CD8-positive, alpha-beta T cell (primary cell): ENCODE measurements at regions of chr17 and their contacts with region 1.

Region 1: GRCh38 chr17:1561400-1562175 is 1.0 kb downstream of the PITPNA start:
- DNase-seq: peak in 8 of 9 experiments; percentile 16 to 62 (median 34)
- ATAC-seq: peak; percentile 35
- H3K4me3 ChIP-seq: peak overlapping the region; percentile 40 to 41
- H3K4me3 Mint-ChIP-seq: peak overlapping the region; percentile 83
- H3K27ac ChIP-seq: peak overlapping the region in 1 of 2 experiments; percentile 40
- H3K27ac Mint-ChIP-seq: peak overlapping the region; percentile 66
- H3K4me1 ChIP-seq: peaks cover 19% of the 10 kb centered on the region
- H3K4me1 Mint-ChIP-seq: peaks cover 45% of the 10 kb centered on the region
- H3K27me3 ChIP-seq: no peaks in the 10 kb centered on the region
- H3K27me3 Mint-ChIP-seq: no peaks in the 10 kb centered on the region
- CTCF ChIP-seq: peak; percentile 38

Region 2: DNA sequence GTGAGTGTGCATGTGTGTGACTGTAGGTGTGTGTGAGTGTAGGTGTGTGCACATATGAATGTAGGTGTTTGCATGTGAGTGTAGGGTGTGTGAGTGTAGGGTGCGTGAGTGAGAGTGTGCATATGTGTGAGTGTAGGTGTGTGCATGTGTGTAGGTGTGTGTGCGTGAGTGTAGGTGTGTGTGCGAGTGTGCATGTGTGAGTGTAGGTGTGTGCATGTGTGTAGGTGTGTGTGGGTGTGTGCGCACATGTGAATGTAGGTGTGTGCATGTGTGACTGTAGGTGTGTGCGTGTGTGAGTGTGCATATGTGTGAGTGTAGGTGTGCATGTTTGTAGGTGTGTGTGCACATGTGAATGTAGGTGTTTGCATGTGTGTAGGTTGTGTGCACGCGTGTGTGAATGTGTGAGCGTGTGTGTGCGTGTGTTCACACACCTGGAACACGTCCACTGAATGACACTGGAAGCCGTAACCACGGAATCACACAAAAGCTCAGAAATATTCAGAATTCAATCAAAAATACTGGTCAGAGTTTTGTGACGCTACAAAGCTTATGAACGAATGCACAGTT is 748.9 kb before region 1 on chr17:
- CTCF ChIA-PET with region 1: no interaction called
- POLR2A ChIA-PET with region 1: no interaction called
- intact Hi-C with region 1: no loop called
- DNase-seq: no peak
- ATAC-seq: no peak
- H3K4me3 ChIP-seq: no peak overlapping the region
- H3K4me3 Mint-ChIP-seq: no peak overlapping the region
- H3K27ac ChIP-seq: no peak overlapping the region
- H3K27ac Mint-ChIP-seq: no peak overlapping the region
- H3K4me1 ChIP-seq: no peaks in the 10 kb centered on the region
- H3K4me1 Mint-ChIP-seq: no peaks in the 10 kb centered on the region
- H3K27me3 ChIP-seq: no peaks in the 10 kb centered on the region
- H3K27me3 Mint-ChIP-seq: peaks cover 9% of the 10 kb centered on the region
- CTCF ChIP-seq: no peak

Region 3: DNA sequence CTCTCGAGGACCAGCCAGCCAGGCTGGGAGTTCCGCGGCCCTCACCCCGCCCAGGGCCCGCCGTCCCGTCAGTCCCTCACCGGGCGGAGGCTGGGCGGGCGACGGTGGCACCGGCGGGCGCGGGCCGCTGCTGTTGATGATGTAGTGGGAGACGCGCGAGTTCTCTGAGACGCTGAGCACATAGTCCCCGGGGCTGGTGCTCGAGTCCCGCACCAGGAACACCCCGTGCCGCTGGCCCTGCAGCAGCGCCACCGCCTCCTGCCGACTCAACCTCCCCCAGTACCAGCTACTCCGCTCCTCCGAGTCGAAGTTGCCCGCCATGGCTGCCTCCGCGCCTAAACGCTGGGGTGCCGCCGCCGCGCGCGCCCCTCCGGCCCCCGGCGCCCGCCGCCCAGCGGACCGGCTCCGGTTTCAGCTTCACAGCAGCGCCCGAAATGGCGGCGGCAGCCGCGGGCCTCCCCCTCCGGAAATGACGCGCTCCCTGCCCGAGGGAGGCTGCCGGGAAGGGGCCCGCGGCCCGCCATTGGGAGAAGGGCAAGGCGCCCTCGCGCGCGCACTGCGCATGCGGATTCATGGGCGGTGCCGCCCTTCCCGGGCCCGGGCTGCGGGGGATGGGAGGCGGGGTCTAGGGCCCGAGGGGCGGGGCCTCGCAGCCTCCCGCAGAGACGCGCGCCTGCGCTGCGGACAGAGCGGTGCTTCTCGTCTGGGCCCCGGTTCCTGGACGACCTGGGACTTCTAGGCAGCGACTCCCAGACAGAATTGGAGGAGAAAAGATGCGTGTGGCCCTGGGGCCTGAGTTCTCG is 105.6 kb before region 1 on chr17 and contains the start of gene CRK:
- CTCF ChIA-PET with region 1: no interaction called
- POLR2A ChIA-PET with region 1: no interaction called
- intact Hi-C with region 1: loop called (anchors 1 to 5 kb)
- DNase-seq: peak; percentile 95 to 100 (median 99)
- ATAC-seq: peak; percentile 95
- H3K4me3 ChIP-seq: peak within 1 kb of the TSS; percentile 80 to 94
- H3K4me3 Mint-ChIP-seq: peak within 1 kb of the TSS; percentile 92
- H3K27ac ChIP-seq: peak within 1 kb of the TSS; percentile 92 to 93
- H3K27ac Mint-ChIP-seq: peak within 1 kb of the TSS; percentile 91
- H3K4me1 ChIP-seq: peaks cover 43% of the 10 kb centered on the region
- H3K4me1 Mint-ChIP-seq: peaks cover 46% of the 10 kb centered on the region
- H3K27me3 ChIP-seq: peaks cover 0 to 10% of the 10 kb centered on the region in 2 experiments
- H3K27me3 Mint-ChIP-seq: peaks cover 10% of the 10 kb centered on the region
- CTCF ChIP-seq: no peak
- total RNA-seq, gene CRK: 15.4 to 15.9 TPM

Region 4: DNA sequence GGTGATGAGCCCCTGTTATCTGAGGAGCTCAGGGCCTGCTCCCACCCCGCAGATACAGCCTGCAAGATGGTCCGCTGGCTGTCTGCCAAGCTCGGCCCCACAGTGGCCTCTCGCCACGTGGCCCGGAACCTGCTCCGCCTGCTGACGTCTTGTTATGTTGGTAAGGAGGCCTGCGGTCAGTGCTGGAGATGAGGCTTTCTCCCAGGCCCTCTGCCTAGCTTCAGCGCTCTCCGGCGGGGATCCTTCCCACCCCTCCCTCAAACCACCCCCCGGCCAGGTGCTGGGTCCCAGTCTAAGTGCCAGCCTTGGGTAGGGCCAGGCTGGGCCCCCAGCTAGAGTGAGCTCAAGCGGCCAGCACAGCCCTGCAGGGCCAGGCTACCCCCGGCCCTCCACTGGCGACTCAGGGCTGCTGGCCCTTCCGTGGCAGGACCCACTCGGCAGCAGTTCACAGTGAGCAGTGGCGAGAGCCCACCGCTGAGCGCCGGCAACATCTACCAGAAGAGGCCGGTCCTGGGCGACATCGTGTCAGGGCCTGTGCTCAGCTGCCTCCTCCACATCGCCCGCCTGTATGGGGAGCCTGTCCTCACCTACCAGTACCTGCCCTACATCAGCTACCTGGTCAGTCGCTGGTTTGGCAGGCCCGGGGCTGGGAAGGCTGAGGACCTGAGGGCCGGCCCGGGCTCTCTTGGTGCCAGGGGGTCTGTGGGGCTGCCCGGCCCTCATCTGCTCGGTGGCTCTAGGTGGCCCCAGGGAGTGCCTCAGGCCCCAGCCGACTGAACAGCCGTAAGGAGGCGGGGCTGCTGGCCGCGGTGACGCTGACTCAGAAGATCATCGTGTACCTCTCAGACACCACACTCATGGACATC is 169.0 kb after region 1 on chr17:
- CTCF ChIA-PET with region 1: no interaction called
- POLR2A ChIA-PET with region 1: no interaction called
- intact Hi-C with region 1: no loop called
- DNase-seq: no peak
- ATAC-seq: no peak
- H3K4me3 ChIP-seq: no peak overlapping the region
- H3K4me3 Mint-ChIP-seq: no peak overlapping the region
- H3K27ac ChIP-seq: no peak overlapping the region
- H3K27ac Mint-ChIP-seq: no peak overlapping the region
- H3K4me1 ChIP-seq: peaks cover 18% of the 10 kb centered on the region
- H3K4me1 Mint-ChIP-seq: peaks cover 23% of the 10 kb centered on the region
- H3K27me3 ChIP-seq: no peaks in the 10 kb centered on the region
- H3K27me3 Mint-ChIP-seq: no peaks in the 10 kb centered on the region
- CTCF ChIP-seq: no peak